ENCODE measurements at regions of chr3 and their contacts with region 1.

Region 1: DNA sequence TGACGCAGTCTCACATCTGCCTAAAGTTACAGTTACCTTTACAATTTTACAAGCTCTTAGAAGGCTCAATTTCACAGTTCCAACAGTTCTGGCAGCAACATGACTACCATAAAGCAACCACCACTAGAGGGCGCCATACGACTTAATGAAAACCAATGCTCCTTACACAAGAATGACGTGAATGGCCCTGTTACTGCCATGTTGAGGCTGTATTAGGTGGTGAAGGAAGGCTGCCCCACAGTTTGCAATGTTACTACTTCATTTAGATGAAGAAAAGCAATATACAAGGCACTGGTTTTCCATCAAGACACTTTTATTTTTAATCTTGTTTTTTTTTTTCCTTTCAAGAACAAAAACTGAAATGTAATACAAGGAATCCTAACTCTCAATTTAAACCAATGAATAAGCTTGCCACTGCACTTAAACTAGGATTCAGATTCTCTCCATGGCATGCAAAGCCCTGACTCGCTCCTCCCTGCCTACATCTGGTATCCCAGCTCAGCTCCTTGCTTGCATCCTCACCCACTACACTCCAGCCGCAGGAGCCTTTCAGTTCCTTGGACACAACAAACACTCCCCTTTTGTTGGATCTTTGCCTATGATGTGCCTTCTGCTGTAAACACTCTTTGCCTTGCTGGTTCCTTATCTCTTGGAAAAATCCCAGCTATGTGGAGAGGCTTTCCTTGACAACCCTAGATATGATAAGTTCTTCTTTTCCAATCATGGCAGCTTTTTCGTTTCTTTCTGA is 270.7 kb downstream of the GBE1 start:
- DNase-seq: peak; percentile 78
- H3K4me3 Mint-ChIP-seq: no peak overlapping the region
- H3K27ac Mint-ChIP-seq: no peak overlapping the region
- H3K4me1 Mint-ChIP-seq: no peaks in the 10 kb centered on the region
- H3K27me3 Mint-ChIP-seq: no peaks in the 10 kb centered on the region

Region 2: GRCh38 chr3:81154611-81155143 is 336.0 kb before region 1 on chr3:
- CTCF ChIA-PET with region 1: no interaction called
- POLR2A ChIA-PET with region 1: no interaction called
- intact Hi-C with region 1: no loop called
- DNase-seq: no peak
- H3K4me3 Mint-ChIP-seq: no peak overlapping the region
- H3K27ac Mint-ChIP-seq: no peak overlapping the region
- H3K4me1 Mint-ChIP-seq: no peaks in the 10 kb centered on the region
- H3K27me3 Mint-ChIP-seq: no peaks in the 10 kb centered on the region

Region 3: DNA sequence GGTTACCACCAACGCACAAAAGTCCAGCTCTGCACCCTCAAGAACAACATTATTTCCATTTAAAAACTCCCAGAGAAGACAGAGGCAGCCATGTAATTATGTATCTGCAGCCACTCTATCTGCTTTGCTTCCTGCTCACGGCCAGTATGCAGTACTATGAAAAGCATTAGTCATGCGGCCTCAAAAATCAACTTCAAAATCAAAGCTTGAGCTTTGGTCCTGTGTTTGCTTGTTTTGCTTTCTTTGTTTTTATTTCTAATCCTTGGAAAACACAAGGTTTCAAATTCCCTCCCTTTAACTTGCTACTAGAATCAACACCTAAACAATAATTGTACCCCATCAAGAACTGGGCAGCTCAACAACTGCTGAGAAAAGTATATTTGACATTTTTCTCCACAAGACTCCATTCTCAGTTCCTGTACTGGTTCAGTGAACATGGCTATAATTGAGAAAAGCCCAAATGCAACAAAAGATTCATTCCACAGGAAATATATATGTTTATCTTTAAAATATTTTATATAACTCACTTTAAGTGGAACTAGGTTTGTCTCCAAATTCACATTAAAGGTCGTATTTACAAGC is 233.1 kb after region 1 on chr3:
- CTCF ChIA-PET with region 1: no interaction called
- POLR2A ChIA-PET with region 1: no interaction called
- intact Hi-C with region 1: no loop called
- DNase-seq: no peak
- H3K4me3 Mint-ChIP-seq: no peak overlapping the region
- H3K27ac Mint-ChIP-seq: no peak overlapping the region
- H3K4me1 Mint-ChIP-seq: no peaks in the 10 kb centered on the region
- H3K27me3 Mint-ChIP-seq: no peaks in the 10 kb centered on the region

Region 4: GRCh38 chr3:81749265-81749664 is 258.6 kb after region 1 on chr3:
- CTCF ChIA-PET with region 1: no interaction called
- POLR2A ChIA-PET with region 1: no interaction called
- intact Hi-C with region 1: no loop called
- DNase-seq: no peak
- H3K4me3 Mint-ChIP-seq: no peak overlapping the region
- H3K27ac Mint-ChIP-seq: no peak overlapping the region
- H3K4me1 Mint-ChIP-seq: no peaks in the 10 kb centered on the region
- H3K27me3 Mint-ChIP-seq: no peaks in the 10 kb centered on the region

Region 5: GRCh38 chr3:81760924-81761903 is 270.5 kb after region 1 on chr3 and contains the start of gene GBE1:
- CTCF ChIA-PET with region 1: no interaction called
- POLR2A ChIA-PET with region 1: no interaction called
- intact Hi-C with region 1: loop called (anchors 1 kb)
- DNase-seq: peak; percentile 92
- H3K4me3 Mint-ChIP-seq: peak within 1 kb of the TSS; percentile 91
- H3K27ac Mint-ChIP-seq: peak within 1 kb of the TSS; percentile 98
- H3K4me1 Mint-ChIP-seq: peaks cover 25% of the 10 kb centered on the region
- H3K27me3 Mint-ChIP-seq: no peaks in the 10 kb centered on the region
- total RNA-seq, gene GBE1: 30.5 to 30.6 TPM

Region 6: DNA sequence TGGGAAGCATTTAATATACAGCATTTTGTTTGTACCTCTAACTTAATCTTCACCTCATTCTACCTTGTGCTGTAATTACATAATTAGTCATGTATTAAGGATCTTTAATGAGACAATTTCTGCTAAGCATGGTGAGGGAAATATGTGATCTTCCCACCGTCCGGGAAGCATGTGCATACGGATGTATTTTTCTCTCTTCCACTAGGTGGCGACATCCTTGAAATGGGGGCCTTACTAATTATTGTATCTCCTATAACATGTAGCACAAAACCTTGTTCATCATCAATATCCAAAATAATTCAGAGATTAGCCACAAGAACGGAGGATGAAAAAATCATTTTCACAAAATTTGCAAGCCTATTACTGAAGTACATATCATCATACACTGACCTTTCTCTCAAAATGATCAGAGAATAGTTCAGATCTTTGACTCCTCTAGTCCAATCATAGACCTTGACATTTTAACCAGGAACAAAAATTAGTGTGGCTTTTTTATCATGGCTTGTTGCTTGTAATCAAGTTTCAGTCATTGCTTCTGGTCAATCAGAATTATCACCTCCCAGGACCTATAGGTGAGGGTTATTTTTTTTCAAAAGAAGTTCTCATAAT is 419.6 kb after region 1 on chr3:
- CTCF ChIA-PET with region 1: interaction called, 3 read pairs
- POLR2A ChIA-PET with region 1: no interaction called
- intact Hi-C with region 1: loop called (anchors 10 kb)
- DNase-seq: peak; percentile 9
- H3K4me3 Mint-ChIP-seq: no peak overlapping the region
- H3K27ac Mint-ChIP-seq: no peak overlapping the region
- H3K4me1 Mint-ChIP-seq: no peaks in the 10 kb centered on the region
- H3K27me3 Mint-ChIP-seq: peaks cover 5% of the 10 kb centered on the region

Region 7: GRCh38 chr3:82133070-82133606 is 642.4 kb after region 1 on chr3:
- CTCF ChIA-PET with region 1: interaction called, 31 read pairs
- POLR2A ChIA-PET with region 1: no interaction called
- intact Hi-C with region 1: loop called (anchors 1 kb)
- DNase-seq: peak; percentile 54
- H3K4me3 Mint-ChIP-seq: no peak overlapping the region
- H3K27ac Mint-ChIP-seq: no peak overlapping the region
- H3K4me1 Mint-ChIP-seq: no peaks in the 10 kb centered on the region
- H3K27me3 Mint-ChIP-seq: no peaks in the 10 kb centered on the region